Activated T-helper 2 cell treated with anti-CD3 and anti-CD28 coated beads, Interferon-gamma antibody, Interleukin-2, Interleukin-4, amounts not matched to agents 10 μg/mL and 5 μg/mL and 100 μg/mL, durations not matched to agents 14 hours and 24 hours and 36 hours (primary cell): ENCODE measurements at regions of chr1 and their contacts with region 1.

Region 1: GRCh38 chr1:89310505-89310904 is 37.8 kb upstream of the GBP5 start:
- DNase-seq: no peak
- H3K4me3 Mint-ChIP-seq: no peak overlapping the region
- H3K27ac Mint-ChIP-seq: peak overlapping the region; percentile 79
- H3K4me1 Mint-ChIP-seq: peaks cover 41% of the 10 kb centered on the region
- H3K27me3 Mint-ChIP-seq: no peaks in the 10 kb centered on the region

Region 2: GRCh38 chr1:89125913-89126580 is 184.5 kb before region 1 on chr1 and contains the start of gene GBP2:
- intact Hi-C with region 1: loop called (anchors 1 kb)
- DNase-seq: no peak
- H3K4me3 Mint-ChIP-seq: peak within 1 kb of the TSS; percentile 97
- H3K27ac Mint-ChIP-seq: peak within 1 kb of the TSS; percentile 99
- H3K4me1 Mint-ChIP-seq: peaks cover 61% of the 10 kb centered on the region
- H3K27me3 Mint-ChIP-seq: no peaks in the 10 kb centered on the region
- total RNA-seq, gene GBP2: 71.9 and 74.1 TPM in 2 replicates

Region 3: GRCh38 chr1:89286549-89287180 is 23.8 kb before region 1 on chr1:
- intact Hi-C with region 1: loop called (anchors 2 kb)
- DNase-seq: no peak
- H3K4me3 Mint-ChIP-seq: peak overlapping the region; percentile 7
- H3K27ac Mint-ChIP-seq: peak overlapping the region; percentile 65
- H3K4me1 Mint-ChIP-seq: peaks cover 64% of the 10 kb centered on the region
- H3K27me3 Mint-ChIP-seq: no peaks in the 10 kb centered on the region

Region 4: GRCh38 chr1:89298461-89298860 is 12.0 kb before region 1 on chr1:
- intact Hi-C with region 1: loop called (anchors 1 kb)
- DNase-seq: no peak
- H3K4me3 Mint-ChIP-seq: no peak overlapping the region
- H3K27ac Mint-ChIP-seq: no peak overlapping the region
- H3K4me1 Mint-ChIP-seq: peaks cover 59% of the 10 kb centered on the region
- H3K27me3 Mint-ChIP-seq: peaks cover 1% of the 10 kb centered on the region

Region 5: GRCh38 chr1:89347296-89347695 is 36.8 kb after region 1 on chr1:
- intact Hi-C with region 1: no loop called
- DNase-seq: no peak
- H3K4me3 Mint-ChIP-seq: no peak overlapping the region
- H3K27ac Mint-ChIP-seq: no peak overlapping the region
- H3K4me1 Mint-ChIP-seq: peaks cover 8% of the 10 kb centered on the region
- H3K27me3 Mint-ChIP-seq: peaks cover 9% of the 10 kb centered on the region